ENCODE measurements at regions of chr13 and their contacts with region 1.

Region 1: GRCh38 chr13:95656386-95657015 is 12.0 kb upstream of the DZIP1 start:
- DNase-seq: no peak
- ATAC-seq: no peak
- H3K4me3 ChIP-seq: no peak overlapping the region
- H3K27ac ChIP-seq: no peak overlapping the region
- H3K4me1 ChIP-seq: no peaks in the 10 kb centered on the region
- H3K27me3 ChIP-seq: peaks cover 0 to 3% (median 0%) of the 10 kb centered on the region in 3 donors
- CTCF ChIP-seq: no peak

Region 2: DNA sequence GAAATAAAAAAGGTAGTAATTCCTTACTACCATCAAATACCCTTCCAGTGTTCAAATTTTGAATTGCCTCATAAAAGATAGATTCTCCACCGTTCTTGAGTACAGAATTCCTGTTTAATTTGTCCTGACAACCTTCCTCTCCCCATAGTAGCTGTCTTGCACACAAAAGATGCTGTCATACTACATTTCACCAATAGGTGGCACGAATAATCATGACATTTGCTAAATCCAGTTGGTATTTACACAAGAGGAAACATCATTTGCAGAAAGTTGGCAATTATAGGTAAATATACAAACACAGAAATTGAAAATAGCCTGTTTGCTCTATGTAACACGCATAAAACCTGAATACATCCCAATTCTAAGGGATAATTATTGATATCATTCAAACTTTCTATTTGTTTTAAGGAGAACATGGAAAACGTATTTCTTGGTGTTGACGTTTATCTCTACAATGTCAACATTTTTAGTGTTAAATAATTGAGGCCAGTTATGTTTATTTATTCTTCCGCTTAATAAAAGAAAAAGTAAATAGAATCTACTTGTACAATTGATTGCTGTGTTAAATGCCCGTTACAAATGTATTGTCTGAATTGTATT is 162.3 kb before region 1 on chr13:
- intact Hi-C with region 1: loop called in 1 of 2 experiments (anchors 10 kb)
- DNase-seq: no peak
- ATAC-seq: no peak
- H3K4me3 ChIP-seq: no peak overlapping the region
- H3K27ac ChIP-seq: no peak overlapping the region
- H3K4me1 ChIP-seq: no peaks in the 10 kb centered on the region
- H3K27me3 ChIP-seq: no peaks in the 10 kb centered on the region
- CTCF ChIP-seq: peak; percentile 77

Region 3: GRCh38 chr13:95704510-95704909 is 48.0 kb after region 1 on chr13:
- intact Hi-C with region 1: no loop called
- DNase-seq: no peak
- ATAC-seq: peak in 3 of 4 donors; percentile 36 to 49 (median 38)
- H3K4me3 ChIP-seq: no peak overlapping the region
- H3K27ac ChIP-seq: no peak overlapping the region
- H3K4me1 ChIP-seq: peaks cover 9% of the 10 kb centered on the region
- H3K27me3 ChIP-seq: no peaks in the 10 kb centered on the region
- CTCF ChIP-seq: no peak

Measured in psoas muscle (tissue), 8 donors.